Vagina (tissue), 2 donors: ENCODE measurements at regions of chr3 and their contacts with region 1.

Region 1: GRCh38 chr3:129058441-129059200 is 2.0 kb upstream of the GP9 start:
- DNase-seq: no peak
- H3K4me3 ChIP-seq: no peak overlapping the region
- H3K27ac ChIP-seq: peak overlapping the region; percentile 54
- H3K4me1 ChIP-seq: peaks cover 4% of the 10 kb centered on the region
- H3K27me3 ChIP-seq: no peaks in the 10 kb centered on the region
- CTCF ChIP-seq: no peak
- POLR2A ChIP-seq: no peak

Region 2: GRCh38 chr3:129120254-129121004 is 61.8 kb after region 1 on chr3:
- intact Hi-C with region 1: loop called (anchors 10 kb)
- DNase-seq: peak in 1 of 2 donors; percentile 95
- H3K4me3 ChIP-seq: peak overlapping the region; percentile 68 to 85
- H3K27ac ChIP-seq: peak overlapping the region; percentile 95
- H3K4me1 ChIP-seq: peaks cover 28% of the 10 kb centered on the region
- H3K27me3 ChIP-seq: no peaks in the 10 kb centered on the region
- CTCF ChIP-seq: no peak
- POLR2A ChIP-seq: peak in 1 of 2 donors; percentile 45